Uterus (tissue), 4 donors: ENCODE measurements at regions of chr7 and their contacts with region 1.

Region 1: DNA sequence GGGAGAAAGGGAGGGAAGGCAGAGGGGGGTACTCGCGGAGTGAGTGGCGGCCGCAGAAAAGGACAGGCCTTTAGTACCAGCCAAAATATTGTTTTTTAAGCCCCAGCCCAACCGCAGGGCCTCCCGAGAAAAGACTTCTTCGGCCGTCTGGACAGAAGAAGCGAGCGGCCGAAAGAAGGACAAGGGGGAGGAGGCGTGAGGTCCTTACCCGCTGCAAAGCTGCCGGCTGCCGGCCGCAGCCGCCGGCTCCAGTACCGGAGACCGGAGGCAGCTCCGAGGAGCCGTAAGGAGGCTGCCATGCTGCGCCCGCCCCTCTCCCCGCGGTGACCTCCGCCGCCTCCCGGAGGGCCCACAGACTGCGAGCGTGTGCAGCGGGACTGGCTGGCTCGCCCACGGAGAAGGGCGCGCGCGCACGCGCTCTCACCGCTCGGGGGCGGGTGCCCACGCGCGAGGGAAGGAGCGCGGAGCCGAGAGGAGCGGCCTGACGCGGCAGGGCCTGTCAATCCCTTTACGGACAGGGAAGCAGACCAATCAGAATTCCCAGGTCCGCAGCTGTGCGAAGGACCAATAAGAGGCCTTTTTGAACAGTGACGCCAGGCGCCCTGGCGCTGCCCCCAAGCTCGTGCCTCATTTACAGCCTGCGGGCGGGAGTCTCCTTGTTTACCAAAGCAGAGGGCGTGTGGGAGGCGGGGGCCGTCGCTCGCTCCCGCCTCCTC is at the start of gene HIBADH:
- DNase-seq: peak; percentile 99 to 100
- H3K4me3 ChIP-seq: peak within 1 kb of the TSS; percentile 78 to 88
- H3K27ac ChIP-seq: peak within 1 kb of the TSS; percentile 94 to 95
- H3K4me1 ChIP-seq: no peaks in the 10 kb centered on the region
- H3K27me3 ChIP-seq: no peaks in the 10 kb centered on the region
- CTCF ChIP-seq: peak in 3 of 4 experiments; percentile 34 to 58 (median 38)
- POLR2A ChIP-seq: peak; percentile 91 to 97
- total RNA-seq, gene HIBADH: 38.9 to 58.8 (median 52.2) TPM

Region 2: GRCh38 chr7:27739909-27740448 is 77.3 kb after region 1 on chr7 and contains the start of gene TAX1BP1:
- intact Hi-C with region 1: loop called (anchors 5 kb)
- DNase-seq: peak; percentile 95
- H3K4me3 ChIP-seq: peak within 1 kb of the TSS; percentile 95 to 96
- H3K27ac ChIP-seq: peak within 1 kb of the TSS; percentile 95 to 99
- H3K4me1 ChIP-seq: peaks cover 0 to under 1% of the 10 kb centered on the region in 2 donors
- H3K27me3 ChIP-seq: no peaks in the 10 kb centered on the region
- CTCF ChIP-seq: peak in 3 of 4 experiments; percentile 3 to 25 (median 23)
- POLR2A ChIP-seq: peak; percentile 92 to 98
- total RNA-seq, gene TAX1BP1: 46.4 to 121 (median 77.3) TPM